ENCODE measurements at regions of chr1 and their contacts with region 1.

Region 1: GRCh38 chr1:202247894-202248681 is 54.5 kb downstream of the LGR6 start:
- DNase-seq: no peak
- CTCF ChIP-seq: no peak

Region 2: DNA sequence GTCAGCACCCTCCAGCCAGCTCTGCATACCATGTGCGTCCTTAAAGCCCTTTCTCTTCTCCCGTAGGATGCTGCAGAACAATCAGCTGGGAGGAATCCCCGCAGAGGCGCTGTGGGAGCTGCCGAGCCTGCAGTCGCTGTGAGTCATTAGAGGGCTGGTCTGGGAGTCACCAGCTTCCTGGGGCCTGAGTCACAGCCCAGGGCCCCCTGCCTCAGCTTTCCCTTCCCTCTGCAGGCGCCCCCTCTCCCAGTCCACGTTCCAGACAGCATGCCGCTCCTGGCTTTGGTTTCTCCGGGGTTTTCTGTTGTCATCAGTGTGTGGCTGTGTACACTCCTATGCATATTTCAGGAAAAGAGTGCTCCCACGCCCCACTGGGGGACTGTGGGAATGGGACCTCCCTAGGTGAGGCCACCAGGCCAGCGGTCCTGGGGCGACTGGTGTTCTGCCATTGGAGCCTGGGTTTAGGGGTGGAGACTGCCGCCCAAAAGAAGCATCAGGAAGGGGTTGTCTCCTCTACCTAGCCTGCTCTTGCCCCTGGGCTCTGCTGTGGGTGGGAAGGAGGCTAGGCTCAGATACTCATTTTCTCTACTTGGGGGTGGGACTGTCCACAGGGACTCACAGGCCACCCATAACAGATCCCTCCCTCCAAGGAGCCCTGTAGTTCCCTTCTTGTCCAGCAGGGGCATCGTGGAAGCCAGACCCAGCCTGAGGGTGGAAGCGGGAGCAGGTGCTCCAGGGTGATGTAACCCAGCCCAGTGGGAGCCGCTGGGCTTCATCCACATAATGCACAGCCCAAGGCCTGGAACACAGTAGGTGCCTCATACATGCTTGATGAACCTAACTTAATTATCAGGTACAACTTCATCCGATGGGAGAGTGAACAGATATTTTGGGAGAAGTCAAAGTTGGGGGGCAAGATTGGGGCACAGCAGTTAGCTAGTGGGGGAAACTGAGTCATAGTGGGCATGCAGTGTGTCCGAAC is 11.9 kb before region 1 on chr1:
- CTCF ChIA-PET with region 1: interaction called, 23 read pairs
- POLR2A ChIA-PET with region 1: no interaction called
- DNase-seq: peak; percentile 84
- CTCF ChIP-seq: peak; percentile 74

Measured in GM10248 (cell line).